Posterior vena cava (tissue), 2 donors: ENCODE measurements at regions of chr10 and their contacts with region 1.

Region 1: GRCh38 chr10:33876584-33877400 is 542.3 kb upstream of the NRP1 start:
- DNase-seq: no peak

Region 2: DNA sequence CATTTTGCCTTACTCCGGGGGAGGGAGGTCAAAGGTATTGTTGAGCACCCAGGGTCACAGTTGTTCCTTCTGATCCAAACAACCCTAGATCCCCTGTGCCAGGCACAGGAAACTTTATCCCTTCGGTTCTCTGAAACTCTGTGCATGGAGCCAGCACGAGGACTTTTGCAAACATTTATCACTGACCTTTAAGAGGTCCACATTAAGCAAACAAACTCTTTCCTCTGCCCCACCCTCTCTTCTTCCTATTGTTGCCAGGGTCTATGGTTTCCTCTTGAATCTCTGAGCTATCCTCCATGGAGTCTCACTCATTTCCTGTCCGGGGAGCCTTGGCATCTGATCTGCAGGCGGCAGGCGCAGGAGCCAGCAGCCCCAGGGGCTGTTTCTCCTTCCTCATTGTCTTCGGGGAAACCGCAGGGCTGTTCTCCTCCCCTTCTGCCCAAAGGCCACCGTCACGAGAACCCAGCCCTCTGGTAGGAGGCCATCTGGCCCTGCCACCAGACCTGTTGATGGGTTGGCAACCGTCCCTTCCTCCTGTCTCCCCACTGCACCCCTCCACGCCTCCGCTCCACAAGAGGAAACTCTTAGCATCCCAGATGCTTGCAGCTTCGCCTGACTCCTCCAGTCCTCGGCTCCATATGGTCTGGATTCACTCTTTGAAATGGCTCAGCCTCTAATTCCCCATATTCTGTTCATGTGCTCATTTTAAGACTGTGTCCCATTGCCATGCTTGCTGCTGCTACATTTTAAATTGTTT is 215.0 kb before region 1 on chr10:
- intact Hi-C with region 1: no loop called
- DNase-seq: peak; percentile 94

Region 3: GRCh38 chr10:33841678-33842077 is 35.1 kb before region 1 on chr10:
- intact Hi-C with region 1: loop called in 1 of 2 experiments (anchors 1 kb)
- DNase-seq: no peak

Region 4: DNA sequence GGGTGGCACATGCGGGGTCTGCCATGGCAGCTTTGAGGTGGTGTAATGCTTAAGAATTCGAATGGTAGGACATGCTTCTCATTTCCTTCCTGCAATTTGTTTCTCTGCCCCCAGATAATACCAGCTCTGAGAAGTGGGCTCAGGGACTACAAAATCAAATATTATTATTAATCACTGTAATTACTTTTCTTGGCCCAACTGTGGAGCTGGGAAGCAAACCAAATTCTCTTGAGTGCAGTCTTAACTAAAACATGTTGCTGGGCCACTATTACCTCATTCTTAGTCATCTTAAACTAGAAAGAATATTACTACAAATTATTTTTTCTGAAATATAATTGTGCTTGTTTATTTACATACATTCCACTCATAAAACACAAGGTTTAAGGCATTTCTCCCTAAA is 24.4 kb after region 1 on chr10:
- intact Hi-C with region 1: no loop called
- DNase-seq: no peak